ENCODE measurements at regions of chr7 and their contacts with region 1.

Region 1: DNA sequence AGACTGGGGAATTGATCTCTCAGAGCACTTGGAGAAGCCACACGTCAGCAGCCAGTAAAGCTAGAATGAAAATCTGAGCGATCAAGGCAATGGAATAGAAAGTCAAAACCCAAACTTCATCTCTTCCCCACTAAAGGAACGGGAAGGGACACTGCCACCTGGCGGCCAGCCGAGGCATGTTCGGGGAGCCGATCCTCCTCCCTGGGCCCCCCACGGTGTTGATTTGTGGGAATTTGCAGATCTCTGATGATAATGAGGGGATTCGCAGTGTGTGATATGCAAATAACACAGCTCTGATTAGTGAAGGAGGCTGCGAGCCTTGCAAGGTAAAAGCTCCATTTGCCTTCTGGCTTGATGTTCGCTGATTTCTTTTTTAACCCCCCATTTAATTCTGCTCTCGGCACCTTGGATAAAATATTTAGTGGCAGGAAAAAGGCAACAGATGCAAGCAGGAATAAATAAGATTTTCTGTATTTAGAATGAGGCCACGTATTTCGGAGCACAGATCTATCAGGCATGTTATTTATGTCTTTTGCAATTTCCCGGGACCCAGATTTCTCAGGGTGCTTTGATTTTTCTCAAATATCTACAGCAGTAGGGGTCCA is 258.6 kb downstream of the PAXIP1 start:
- DNase-seq: peak; percentile 0
- H3K4me3 Mint-ChIP-seq: no peak overlapping the region
- H3K27ac Mint-ChIP-seq: no peak overlapping the region
- H3K4me1 Mint-ChIP-seq: no peaks in the 10 kb centered on the region
- H3K27me3 Mint-ChIP-seq: no peaks in the 10 kb centered on the region
- CTCF ChIP-seq: peak; percentile 49

Region 2: DNA sequence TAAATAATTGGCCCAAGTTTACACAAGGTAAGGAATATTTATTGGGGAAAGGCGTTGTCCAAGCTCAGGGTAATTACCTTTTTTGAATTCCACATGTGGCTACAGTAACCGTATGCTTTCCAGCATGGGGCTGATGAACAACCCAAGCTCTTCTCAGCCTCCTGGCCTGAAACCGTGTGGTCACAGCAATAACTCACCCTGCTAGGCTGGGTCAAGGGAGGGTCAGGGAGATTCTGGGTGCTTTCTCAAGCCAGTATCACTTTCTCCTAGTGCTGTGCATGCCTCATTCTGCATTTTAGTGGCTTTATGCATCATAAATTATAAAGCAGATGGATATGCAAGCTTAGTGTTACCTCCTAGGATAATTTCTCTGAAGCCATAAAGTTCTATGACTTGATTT is 15.3 kb before region 1 on chr7:
- CTCF ChIA-PET with region 1: interaction called, 16 read pairs
- POLR2A ChIA-PET with region 1: no interaction called
- intact Hi-C with region 1: no loop called
- DNase-seq: no peak
- H3K4me3 Mint-ChIP-seq: no peak overlapping the region
- H3K27ac Mint-ChIP-seq: no peak overlapping the region
- H3K4me1 Mint-ChIP-seq: no peaks in the 10 kb centered on the region
- H3K27me3 Mint-ChIP-seq: no peaks in the 10 kb centered on the region
- CTCF ChIP-seq: no peak

Region 3: GRCh38 chr7:154777023-154777422 is 32.7 kb after region 1 on chr7:
- CTCF ChIA-PET with region 1: interaction called, 10 read pairs
- POLR2A ChIA-PET with region 1: no interaction called
- intact Hi-C with region 1: no loop called
- DNase-seq: peak; percentile 9
- H3K4me3 Mint-ChIP-seq: no peak overlapping the region
- H3K27ac Mint-ChIP-seq: no peak overlapping the region
- H3K4me1 Mint-ChIP-seq: peaks cover 11% of the 10 kb centered on the region
- H3K27me3 Mint-ChIP-seq: no peaks in the 10 kb centered on the region
- CTCF ChIP-seq: no peak

Region 4: GRCh38 chr7:154984601-154985188 is 240.3 kb after region 1 on chr7:
- CTCF ChIA-PET with region 1: no interaction called
- POLR2A ChIA-PET with region 1: no interaction called
- intact Hi-C with region 1: no loop called
- DNase-seq: no peak
- H3K4me3 Mint-ChIP-seq: no peak overlapping the region
- H3K27ac Mint-ChIP-seq: no peak overlapping the region
- H3K4me1 Mint-ChIP-seq: peaks cover 14% of the 10 kb centered on the region
- H3K27me3 Mint-ChIP-seq: no peaks in the 10 kb centered on the region
- CTCF ChIP-seq: no peak

Region 5: DNA sequence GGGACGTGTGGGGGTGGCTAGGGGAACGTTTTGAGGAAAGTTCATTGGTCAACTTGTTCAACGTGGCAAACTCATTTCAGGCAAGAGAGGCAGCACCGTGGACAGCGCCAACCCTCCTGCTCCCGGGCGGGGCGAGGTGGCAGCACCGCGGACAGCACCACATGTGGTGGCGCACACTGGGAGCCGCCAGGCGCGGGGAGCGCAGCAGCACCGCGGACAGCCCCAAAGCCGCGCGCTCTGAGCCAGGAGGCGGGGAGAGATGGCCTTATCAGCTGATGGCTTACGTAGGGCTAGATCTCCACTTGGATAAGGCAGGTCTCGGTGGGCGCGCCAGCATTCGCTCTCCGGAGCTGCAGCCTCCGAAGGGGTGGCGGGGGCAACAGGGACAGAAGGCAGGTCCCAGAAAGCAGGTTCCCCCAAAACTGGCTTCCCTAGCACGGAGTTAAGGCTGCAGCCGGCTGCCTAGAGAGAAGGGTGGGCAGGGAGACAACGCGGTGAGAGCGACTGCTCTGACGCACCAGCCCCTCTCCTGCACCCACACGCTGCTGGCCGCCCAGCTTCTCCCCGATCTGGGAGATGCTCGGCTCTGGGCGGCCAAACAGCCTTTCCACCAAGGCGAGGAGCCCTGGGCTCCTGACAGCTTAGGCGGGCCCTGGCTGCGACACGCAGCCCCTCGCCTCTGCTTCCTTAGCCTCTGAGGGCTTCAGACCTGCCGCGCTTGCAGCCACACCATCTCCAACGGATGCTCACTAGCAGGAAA is 325.8 kb after region 1 on chr7 and contains the start of gene HTR5A:
- CTCF ChIA-PET with region 1: no interaction called
- POLR2A ChIA-PET with region 1: no interaction called
- intact Hi-C with region 1: no loop called
- DNase-seq: peak; percentile 79
- H3K4me3 Mint-ChIP-seq: no peak within 1 kb of the TSS
- H3K27ac Mint-ChIP-seq: no peak within 1 kb of the TSS
- H3K4me1 Mint-ChIP-seq: no peaks in the 10 kb centered on the region
- H3K27me3 Mint-ChIP-seq: peaks cover 31% of the 10 kb centered on the region
- CTCF ChIP-seq: no peak
- total RNA-seq, gene HTR5A: not detected in 2 replicates

Measured in MCF 10A (cell line).